IMR-90 (cell line): ENCODE measurements at regions of chr10 and their contacts with region 1.

Region 1: DNA sequence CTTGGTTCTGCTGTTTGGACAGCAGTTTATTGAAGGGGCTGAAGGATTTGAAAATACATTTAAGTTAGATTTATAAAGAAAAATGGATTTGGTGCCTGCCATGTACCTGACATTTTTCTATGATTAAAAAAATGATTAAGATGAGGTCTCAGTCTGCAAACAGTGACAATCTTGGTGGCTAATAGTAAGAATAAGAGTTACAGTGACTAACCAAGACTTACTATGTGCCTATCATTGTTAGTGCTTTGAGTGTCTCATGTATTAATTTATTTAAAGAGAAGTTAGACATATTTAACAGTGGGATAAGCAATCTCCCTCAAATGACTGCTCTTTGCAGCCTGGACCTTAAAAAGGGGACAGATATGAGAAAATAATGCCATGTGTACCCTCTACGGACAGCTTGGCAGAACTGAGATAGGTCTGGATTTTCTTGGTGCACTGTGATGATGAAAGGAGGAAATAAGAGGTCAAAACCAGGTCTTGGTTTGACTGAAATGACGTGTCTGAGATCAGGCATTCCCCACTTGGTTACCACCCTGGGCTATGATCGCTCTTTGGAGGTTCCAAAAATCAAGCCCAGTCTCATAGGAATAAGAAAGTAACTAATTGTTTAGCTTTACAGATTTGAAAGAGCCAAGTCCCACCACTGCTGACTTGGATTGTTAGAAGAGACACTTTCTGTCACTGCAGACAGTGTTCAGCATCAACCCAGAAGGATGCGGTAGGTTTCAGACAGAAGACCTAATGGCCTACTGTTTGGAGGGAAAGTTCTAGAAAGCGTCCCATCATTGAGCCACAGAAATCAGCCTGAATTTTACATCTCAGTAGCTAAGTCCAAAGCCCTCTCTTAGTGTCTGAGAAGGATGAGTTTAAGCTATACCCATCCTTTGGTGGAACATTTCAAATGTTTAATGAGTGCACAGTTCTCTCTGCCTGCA is 2.1 kb downstream of the CASP7 start:
- DNase-seq: no peak
- ATAC-seq: no peak
- H3K4me3 ChIP-seq: no peak overlapping the region
- H3K27ac ChIP-seq: no peak overlapping the region
- H3K4me1 ChIP-seq: 0 out of 2 replicates have a peak, but pooled peaks cover 2% of the 10 kb centered on the region
- H3K27me3 ChIP-seq: no peaks in the 10 kb centered on the region
- CTCF ChIP-seq: no peak
- POLR2A ChIP-seq: no peak
- RAD21 ChIP-seq: no peak

Region 2: DNA sequence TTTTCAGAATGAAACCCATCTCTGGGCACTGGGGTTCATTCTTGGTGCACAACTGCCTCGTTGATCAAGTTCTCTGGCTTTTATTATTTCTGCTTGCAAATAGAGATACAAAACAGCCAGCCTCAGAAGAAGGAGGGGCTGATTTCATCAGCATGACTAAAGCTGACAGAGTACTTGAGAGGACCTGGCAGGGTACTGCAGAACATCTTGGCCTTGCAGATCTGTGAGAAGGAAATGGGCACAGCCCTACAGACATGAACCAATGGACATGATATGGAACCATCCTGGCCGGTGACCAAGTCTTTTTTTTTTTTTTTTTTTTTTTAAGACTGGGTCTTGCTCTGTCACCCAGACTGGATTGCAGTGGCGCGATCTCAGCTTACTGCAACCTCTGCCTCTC is 994.2 kb before region 1 on chr10:
- CTCF ChIA-PET with region 1: no interaction called
- POLR2A ChIA-PET with region 1: interaction called, 15 read pairs
- dilution Hi-C with region 1: no loop called
- in situ Hi-C with region 1: no loop called
- intact Hi-C with region 1: no loop called
- DNase-seq: peak; percentile 64
- ATAC-seq: peak; percentile 74
- H3K4me3 ChIP-seq: no peak overlapping the region
- H3K27ac ChIP-seq: no peak overlapping the region
- H3K4me1 ChIP-seq: no peaks in the 10 kb centered on the region
- H3K27me3 ChIP-seq: no peaks in the 10 kb centered on the region
- CTCF ChIP-seq: no peak
- POLR2A ChIP-seq: no peak
- RAD21 ChIP-seq: no peak

Region 3: GRCh38 chr10:114532226-114532625 is 850.4 kb after region 1 on chr10:
- CTCF ChIA-PET with region 1: no interaction called
- POLR2A ChIA-PET with region 1: no interaction called
- dilution Hi-C with region 1: no loop called
- in situ Hi-C with region 1: no loop called
- intact Hi-C with region 1: no loop called
- DNase-seq: no peak
- ATAC-seq: no peak
- H3K4me3 ChIP-seq: no peak overlapping the region
- H3K27ac ChIP-seq: no peak overlapping the region
- H3K4me1 ChIP-seq: no peaks in the 10 kb centered on the region
- H3K27me3 ChIP-seq: peaks cover 37% of the 10 kb centered on the region
- CTCF ChIP-seq: no peak
- POLR2A ChIP-seq: no peak
- RAD21 ChIP-seq: no peak